Tibial artery (tissue), 4 donors: ENCODE measurements at regions of chr11 and their contacts with region 1.

Region 1: GRCh38 chr11:132586801-132587200 is 945.5 kb downstream of the OPCML start:
- DNase-seq: no peak
- H3K4me3 ChIP-seq: no peak overlapping the region
- H3K27ac ChIP-seq: no peak overlapping the region
- H3K4me1 ChIP-seq: no peaks in the 10 kb centered on the region
- H3K27me3 ChIP-seq: no peaks in the 10 kb centered on the region
- CTCF ChIP-seq: no peak

Region 2: DNA sequence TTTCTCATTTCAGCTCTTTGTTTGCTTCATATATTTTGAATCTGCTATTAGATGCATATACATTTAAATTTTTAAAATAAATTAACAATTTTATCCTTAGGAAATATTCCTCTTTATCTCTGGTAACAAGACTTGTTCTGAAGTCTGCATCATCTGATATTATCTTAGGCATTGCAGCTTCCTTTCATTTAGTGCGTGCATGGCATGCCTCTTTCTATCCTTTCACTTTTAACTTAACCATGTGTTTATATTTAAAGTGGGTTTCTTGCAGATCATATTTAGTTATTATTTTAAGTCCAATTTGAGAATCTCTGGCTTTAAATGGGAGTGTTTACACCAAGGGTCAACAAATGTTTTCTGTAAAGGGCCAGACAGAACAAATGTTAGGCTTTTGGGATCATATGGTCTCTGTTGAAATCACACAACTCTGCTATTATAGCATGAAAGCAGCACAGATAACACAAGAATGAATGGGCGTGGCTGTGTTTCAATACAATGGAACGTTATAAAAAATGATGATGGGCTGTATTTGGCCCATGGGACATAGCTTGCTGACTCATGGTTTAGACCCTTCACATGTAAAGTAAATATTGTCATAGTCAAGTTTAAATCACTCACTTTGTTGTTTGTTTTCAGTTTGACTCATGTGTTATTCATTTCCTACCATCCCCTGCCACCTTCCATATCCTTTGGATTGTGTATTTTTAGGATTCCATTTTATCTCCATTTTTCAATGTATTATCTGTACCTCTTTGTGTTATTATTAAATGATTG is 1586.6 kb before region 1 on chr11:
- intact Hi-C with region 1: loop called (anchors 10 kb)
- DNase-seq: no peak
- H3K4me3 ChIP-seq: no peak overlapping the region
- H3K27ac ChIP-seq: no peak overlapping the region
- H3K4me1 ChIP-seq: no peaks in the 10 kb centered on the region
- H3K27me3 ChIP-seq: no peaks in the 10 kb centered on the region
- CTCF ChIP-seq: no peak

Region 3: DNA sequence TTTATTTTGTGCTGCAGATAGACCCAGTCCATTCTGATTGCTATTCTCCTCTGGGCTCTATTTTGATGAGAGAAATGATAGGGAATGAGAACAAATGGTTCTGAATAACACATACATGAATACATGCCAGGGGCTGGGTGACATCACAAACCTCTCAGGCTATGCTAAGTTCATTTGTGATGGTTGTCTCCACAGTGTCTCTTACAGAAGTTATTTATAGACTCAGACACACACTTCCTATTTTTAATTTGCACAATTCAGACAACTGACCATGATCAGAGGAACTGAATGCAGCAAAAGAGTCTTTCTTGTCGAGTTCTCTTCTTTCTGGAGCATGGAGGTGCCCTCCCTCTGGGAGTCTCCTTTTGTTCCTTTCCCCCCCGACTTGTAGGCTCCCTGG is 46.2 kb before region 1 on chr11:
- intact Hi-C with region 1: no loop called
- DNase-seq: no peak
- H3K4me3 ChIP-seq: no peak overlapping the region
- H3K27ac ChIP-seq: no peak overlapping the region
- H3K4me1 ChIP-seq: no peaks in the 10 kb centered on the region
- H3K27me3 ChIP-seq: no peaks in the 10 kb centered on the region
- CTCF ChIP-seq: no peak

Region 4: DNA sequence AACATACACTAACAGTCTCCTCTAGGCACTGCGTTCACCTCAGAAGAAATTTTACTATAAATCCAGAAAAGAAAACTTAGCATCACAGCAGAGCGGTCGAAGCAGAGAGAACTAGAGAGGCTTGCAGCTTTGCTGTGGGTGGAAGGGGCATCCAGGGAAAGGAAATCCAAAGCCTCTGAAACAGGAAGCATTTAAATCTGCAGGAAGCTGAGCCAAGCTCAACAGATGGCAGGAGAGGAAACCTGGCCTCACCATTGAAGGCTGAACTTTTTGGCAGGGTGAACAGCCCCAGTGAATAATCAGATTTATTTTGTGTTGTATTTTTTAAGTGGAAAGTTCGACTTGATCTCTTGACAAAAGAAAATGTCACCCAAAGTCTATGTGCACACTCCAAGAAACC is 87.3 kb after region 1 on chr11:
- intact Hi-C with region 1: no loop called
- DNase-seq: no peak
- H3K4me3 ChIP-seq: no peak overlapping the region
- H3K27ac ChIP-seq: no peak overlapping the region
- H3K4me1 ChIP-seq: no peaks in the 10 kb centered on the region
- H3K27me3 ChIP-seq: no peaks in the 10 kb centered on the region
- CTCF ChIP-seq: no peak